CD14-positive monocyte (primary cell): ENCODE measurements at regions of chrX and their contacts with region 1.

Region 1: GRCh38 chrX:153599192-153600031 is 473 bp upstream of the CCNQ start:
- DNase-seq: peak; percentile 83 to 88 (median 85)
- H3K4me3 ChIP-seq: peak overlapping the region; percentile 65 to 84 (median 72)
- H3K4me3 Mint-ChIP-seq: peak overlapping the region; percentile 69 to 84
- H3K27ac ChIP-seq: peak overlapping the region in 1 of 2 donors; percentile 55
- H3K27ac Mint-ChIP-seq: peak overlapping the region in 4 of 7 donors; percentile 12 to 71 (median 60)
- H3K4me1 ChIP-seq: peaks cover 27 to 29% of the 10 kb centered on the region in 2 donors
- H3K4me1 Mint-ChIP-seq: peaks cover 39% of the 10 kb centered on the region
- H3K27me3 ChIP-seq: no peaks in the 10 kb centered on the region
- H3K27me3 Mint-ChIP-seq: peaks cover 0 to 33% (median 4%) of the 10 kb centered on the region in 3 donors
- CTCF ChIP-seq: no peak

Region 2: GRCh38 chrX:153333768-153334645 is 265.4 kb before region 1 on chrX and contains the start of gene ZNF275:
- intact Hi-C with region 1: loop called in 1 of 2 experiments (anchors 10 kb)
- DNase-seq: peak; percentile 72 to 76 (median 75)
- H3K4me3 ChIP-seq: peak within 1 kb of the TSS; percentile 72 to 92 (median 76)
- H3K4me3 Mint-ChIP-seq: peak within 1 kb of the TSS; percentile 87 to 94
- H3K27ac ChIP-seq: peak within 1 kb of the TSS in 1 of 2 donors; percentile 74
- H3K27ac Mint-ChIP-seq: peak within 1 kb of the TSS in 4 of 7 donors; percentile 63 to 89 (median 70)
- H3K4me1 ChIP-seq: peaks cover 4 to 7% of the 10 kb centered on the region in 2 donors
- H3K4me1 Mint-ChIP-seq: peaks cover 13% of the 10 kb centered on the region
- H3K27me3 ChIP-seq: peaks cover 0 to 2% of the 10 kb centered on the region in 2 donors
- H3K27me3 Mint-ChIP-seq: peaks cover 2 to 15% (median 4%) of the 10 kb centered on the region in 3 donors
- CTCF ChIP-seq: no peak
- polyA plus RNA-seq, gene ZNF275: 1.0 to 4.7 (median 2.1) TPM

Region 3: GRCh38 chrX:153763989-153764755 is 164.8 kb after region 1 on chrX and contains the start of gene PLXNB3:
- intact Hi-C with region 1: no loop called
- DNase-seq: peak; percentile 52 to 66 (median 59)
- H3K4me3 ChIP-seq: no peak within 1 kb of the TSS
- H3K4me3 Mint-ChIP-seq: no peak within 1 kb of the TSS
- H3K27ac ChIP-seq: no peak within 1 kb of the TSS
- H3K27ac Mint-ChIP-seq: no peak within 1 kb of the TSS
- H3K4me1 ChIP-seq: peaks cover 0 to 5% of the 10 kb centered on the region in 2 donors
- H3K4me1 Mint-ChIP-seq: peaks cover 14% of the 10 kb centered on the region
- H3K27me3 ChIP-seq: no peaks in the 10 kb centered on the region
- H3K27me3 Mint-ChIP-seq: peaks cover 1 to 23% (median 16%) of the 10 kb centered on the region in 3 donors
- CTCF ChIP-seq: peak; percentile 72
- polyA plus RNA-seq, gene PLXNB3: not detected